GM13977 (cell line): ENCODE measurements at regions of chr14 and their contacts with region 1.

Region 1: DNA sequence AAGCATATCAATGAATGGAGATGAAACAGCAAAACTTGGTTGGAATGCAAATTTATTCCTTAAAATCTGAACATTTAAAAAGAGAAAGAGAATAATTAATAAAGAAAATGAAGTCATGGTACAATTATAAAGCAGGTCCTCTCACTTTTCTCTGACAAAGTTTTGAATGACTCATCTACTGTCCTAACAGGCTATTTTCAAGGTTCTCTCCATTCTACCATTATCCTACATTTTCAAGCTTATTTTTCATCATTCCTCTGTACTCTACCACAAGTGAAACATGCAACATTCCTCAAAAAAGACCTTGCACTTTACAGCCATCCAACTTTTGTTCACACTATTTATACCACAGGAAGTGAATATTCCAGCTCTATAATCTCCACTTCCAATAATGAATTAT is 36.9 kb upstream of the AP4S1 start:
- DNase-seq: no peak
- CTCF ChIP-seq: no peak

Region 2: GRCh38 chr14:31070431-31070830 is 81.9 kb after region 1 on chr14:
- in situ Hi-C with region 1: loop called (anchors 10 kb)
- DNase-seq: no peak
- CTCF ChIP-seq: no peak

Region 3: GRCh38 chr14:31219169-31219568 is 230.7 kb after region 1 on chr14:
- in situ Hi-C with region 1: no loop called
- DNase-seq: no peak
- CTCF ChIP-seq: no peak